Sigmoid colon (tissue), 7 donors: ENCODE measurements at regions of chr2 and their contacts with region 1.

Region 1: GRCh38 chr2:219155054-219155644 is 5.5 kb downstream of the NHEJ1 start:
- DNase-seq: no peak
- H3K4me3 ChIP-seq: no peak overlapping the region
- H3K27ac ChIP-seq: no peak overlapping the region
- H3K4me1 ChIP-seq: peaks cover 0 to 6% (median 5%) of the 10 kb centered on the region in 4 donors
- H3K27me3 ChIP-seq: no peaks in the 10 kb centered on the region
- CTCF ChIP-seq: peak in 3 of 4 experiments; percentile 47 to 64 (median 62)
- EP300 ChIP-seq: no peak
- POLR2A ChIP-seq: no peak

Region 2: GRCh38 chr2:218995972-218996711 is 159.0 kb before region 1 on chr2:
- intact Hi-C with region 1: loop called (anchors 10 kb)
- DNase-seq: peak; percentile 94
- H3K4me3 ChIP-seq: peak overlapping the region; percentile 7 to 40 (median 31)
- H3K27ac ChIP-seq: no peak overlapping the region
- H3K4me1 ChIP-seq: peaks cover 0 to 30% (median 26%) of the 10 kb centered on the region in 4 donors
- H3K27me3 ChIP-seq: peaks cover 53 to 98% (median 78%) of the 10 kb centered on the region in 3 donors
- CTCF ChIP-seq: peak; percentile 71 to 89 (median 86)
- EP300 ChIP-seq: no peak
- POLR2A ChIP-seq: peak in 1 of 2 donors; percentile 63

Region 3: GRCh38 chr2:219029829-219030165 is 125.4 kb before region 1 on chr2:
- intact Hi-C with region 1: loop called (anchors 1 kb)
- DNase-seq: peak; percentile 85
- H3K4me3 ChIP-seq: no peak overlapping the region
- H3K27ac ChIP-seq: no peak overlapping the region
- H3K4me1 ChIP-seq: no peaks in the 10 kb centered on the region
- H3K27me3 ChIP-seq: peaks cover 4 to 35% (median 25%) of the 10 kb centered on the region in 3 donors
- CTCF ChIP-seq: peak; percentile 57 to 93 (median 77)
- EP300 ChIP-seq: no peak
- POLR2A ChIP-seq: no peak

Region 4: GRCh38 chr2:219701847-219702634 is 546.9 kb after region 1 on chr2:
- intact Hi-C with region 1: no loop called
- DNase-seq: no peak
- H3K4me3 ChIP-seq: no peak overlapping the region
- H3K27ac ChIP-seq: no peak overlapping the region
- H3K4me1 ChIP-seq: peaks cover 0 to 13% (median 9%) of the 10 kb centered on the region in 4 donors
- H3K27me3 ChIP-seq: no peaks in the 10 kb centered on the region
- CTCF ChIP-seq: no peak
- EP300 ChIP-seq: no peak
- POLR2A ChIP-seq: no peak